Astrocyte of the cerebellum (primary cell): ENCODE measurements at regions of chr9 and their contacts with region 1.

Region 1: DNA sequence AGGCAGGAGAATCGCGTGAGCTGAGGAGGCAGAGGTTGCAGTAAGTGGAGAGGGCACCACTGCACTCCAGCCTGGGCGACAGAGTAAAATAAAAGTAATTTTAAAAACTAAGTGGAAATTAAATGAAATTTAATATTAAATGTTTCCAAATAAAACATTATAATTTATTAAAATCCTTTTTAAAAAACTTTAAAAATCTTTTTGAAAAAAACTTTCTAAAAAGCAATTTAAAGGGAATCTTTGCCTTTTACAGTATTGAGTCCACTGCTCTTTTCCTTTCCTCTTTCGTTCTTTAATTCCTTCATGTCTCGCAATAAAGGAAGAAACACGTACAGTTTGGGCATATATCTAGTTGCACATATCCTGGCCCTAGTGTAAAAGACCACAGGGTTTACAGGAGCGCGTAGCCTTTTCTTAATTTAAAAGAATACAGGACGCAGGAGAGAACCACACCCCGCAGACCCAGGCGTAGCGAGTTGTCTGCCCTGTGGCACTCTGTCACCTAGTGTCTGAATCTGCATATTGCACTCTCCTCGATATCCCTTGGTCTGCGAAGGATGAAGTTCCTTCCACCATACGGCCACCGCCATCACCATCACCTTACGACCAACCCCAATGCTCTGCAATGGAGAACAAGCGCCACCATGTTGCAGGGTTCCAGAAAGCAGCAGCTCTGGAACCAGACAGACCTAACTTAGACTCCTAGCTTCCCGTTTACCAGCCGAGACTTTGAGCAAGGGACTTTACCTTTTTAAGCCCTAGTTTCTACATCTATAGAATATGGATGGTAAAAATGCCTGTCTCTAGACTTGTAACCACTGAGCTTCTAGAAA is 77.6 kb upstream of the DMRT1 start:
- DNase-seq: no peak
- H3K4me3 ChIP-seq: no peak overlapping the region
- CTCF ChIP-seq: peak; percentile 69

Region 2: GRCh38 chr9:806285-807156 is 42.6 kb after region 1 on chr9:
- in situ Hi-C with region 1: loop called (anchors 5 kb)
- DNase-seq: peak; percentile 38
- H3K4me3 ChIP-seq: no peak overlapping the region
- CTCF ChIP-seq: peak; percentile 75

Region 3: DNA sequence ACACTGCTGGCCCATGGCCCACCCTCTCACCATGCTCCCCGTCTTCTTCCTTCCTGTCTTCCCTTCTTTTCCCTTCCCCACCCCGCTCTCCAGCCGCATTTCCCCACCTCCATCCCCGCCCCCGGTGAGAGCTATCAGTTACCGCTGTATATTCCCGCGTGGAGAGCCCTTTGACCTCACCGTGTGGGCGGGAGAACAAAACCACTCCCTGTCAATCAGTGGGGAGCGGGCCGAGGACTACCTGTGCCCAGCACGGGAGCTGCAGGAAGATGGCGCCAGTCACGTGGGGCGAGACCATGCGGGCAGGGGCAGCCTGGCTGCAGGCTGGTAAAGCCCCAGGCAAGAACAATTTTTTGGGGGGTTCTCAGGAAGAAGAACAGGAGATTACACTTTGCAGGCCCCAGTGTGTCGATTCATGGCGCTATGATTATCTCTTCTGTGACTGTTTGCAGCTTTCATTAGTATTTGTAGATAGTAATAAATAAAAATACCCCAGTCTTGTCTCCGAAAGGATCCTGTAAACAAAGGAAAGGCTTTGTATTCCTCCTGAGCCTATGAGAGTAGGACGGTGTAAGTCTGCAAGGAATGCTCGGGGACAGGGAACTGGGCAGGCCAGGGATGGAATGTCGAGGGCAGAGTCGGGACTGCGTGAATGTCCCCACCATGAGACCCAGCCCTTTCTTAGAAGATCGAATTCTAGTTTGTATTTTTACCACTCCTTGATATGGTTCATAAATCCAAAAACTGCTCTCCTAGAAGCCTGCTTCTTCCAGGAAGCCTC is 62.8 kb after region 1 on chr9:
- in situ Hi-C with region 1: no loop called
- DNase-seq: no peak
- H3K4me3 ChIP-seq: no peak overlapping the region
- CTCF ChIP-seq: no peak

Region 4: GRCh38 chr9:860706-861105 is 96.8 kb after region 1 on chr9:
- in situ Hi-C with region 1: no loop called
- DNase-seq: no peak
- H3K4me3 ChIP-seq: no peak overlapping the region
- CTCF ChIP-seq: no peak